ENCODE measurements at regions of chr2 and their contacts with region 1.

Region 1: DNA sequence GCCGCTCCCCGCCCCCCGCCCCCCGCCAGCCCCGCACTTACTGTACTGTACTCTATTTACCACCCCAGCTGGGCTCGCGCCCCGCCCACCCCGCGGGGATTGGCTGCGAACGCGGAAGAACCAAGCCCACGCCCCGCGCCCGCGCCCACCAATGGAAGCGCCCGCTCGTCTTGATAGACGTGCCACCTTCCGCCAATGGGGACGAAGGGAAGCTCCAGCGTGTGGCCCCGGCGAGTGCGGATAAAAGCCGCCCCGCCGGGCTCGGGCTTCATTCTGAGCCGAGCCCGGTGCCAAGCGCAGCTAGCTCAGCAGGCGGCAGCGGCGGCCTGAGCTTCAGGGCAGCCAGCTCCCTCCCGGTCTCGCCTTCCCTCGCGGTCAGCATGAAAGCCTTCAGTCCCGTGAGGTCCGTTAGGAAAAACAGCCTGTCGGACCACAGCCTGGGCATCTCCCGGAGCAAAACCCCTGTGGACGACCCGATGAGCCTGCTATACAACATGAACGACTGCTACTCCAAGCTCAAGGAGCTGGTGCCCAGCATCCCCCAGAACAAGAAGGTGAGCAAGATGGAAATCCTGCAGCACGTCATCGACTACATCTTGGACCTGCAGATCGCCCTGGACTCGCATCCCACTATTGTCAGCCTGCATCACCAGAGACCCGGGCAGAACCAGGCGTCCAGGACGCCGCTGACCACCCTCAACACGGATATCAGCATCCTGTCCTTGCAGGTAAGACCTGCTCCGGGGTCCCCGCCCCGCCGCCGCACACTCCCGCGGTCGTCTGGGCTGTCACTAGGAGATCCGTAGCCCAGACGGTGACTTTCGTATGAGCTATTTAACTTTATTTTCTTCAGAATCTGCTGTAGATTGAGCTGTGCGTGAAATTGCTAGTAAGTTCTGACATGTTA is at the start of gene ID2:
- DNase-seq: peak; percentile 92
- ATAC-seq: peak; percentile 81
- H3K4me3 ChIP-seq: peak within 1 kb of the TSS; percentile 41 to 77 (median 57)
- H3K4me3 Mint-ChIP-seq: peak within 1 kb of the TSS; percentile 92
- H3K27ac ChIP-seq: no peak within 1 kb of the TSS
- H3K27ac Mint-ChIP-seq: peak within 1 kb of the TSS; percentile 71
- H3K4me1 ChIP-seq: peaks cover 43 to 57% of the 10 kb centered on the region in 2 donors
- H3K4me1 Mint-ChIP-seq: peaks cover 54% of the 10 kb centered on the region
- H3K27me3 ChIP-seq: peaks cover 2 to 66% (median 49%) of the 10 kb centered on the region in 4 experiments
- H3K27me3 Mint-ChIP-seq: peaks cover 67% of the 10 kb centered on the region
- CTCF ChIP-seq: no peak
- total RNA-seq, gene ID2: 14.3 and 15.0 TPM in 2 replicates

Region 2: GRCh38 chr2:7037340-7038333 is 1644.4 kb before region 1 on chr2:
- CTCF ChIA-PET with region 1: no interaction called
- POLR2A ChIA-PET with region 1: no interaction called
- intact Hi-C with region 1: loop called (anchors 1 kb)
- DNase-seq: peak; percentile 59
- ATAC-seq: peak; percentile 56
- H3K4me3 ChIP-seq: no peak overlapping the region
- H3K4me3 Mint-ChIP-seq: no peak overlapping the region
- H3K27ac ChIP-seq: no peak overlapping the region
- H3K27ac Mint-ChIP-seq: no peak overlapping the region
- H3K4me1 ChIP-seq: no peaks in the 10 kb centered on the region
- H3K4me1 Mint-ChIP-seq: peaks cover 1% of the 10 kb centered on the region
- H3K27me3 ChIP-seq: no peaks in the 10 kb centered on the region
- H3K27me3 Mint-ChIP-seq: no peaks in the 10 kb centered on the region
- CTCF ChIP-seq: peak; percentile 84

Region 3: DNA sequence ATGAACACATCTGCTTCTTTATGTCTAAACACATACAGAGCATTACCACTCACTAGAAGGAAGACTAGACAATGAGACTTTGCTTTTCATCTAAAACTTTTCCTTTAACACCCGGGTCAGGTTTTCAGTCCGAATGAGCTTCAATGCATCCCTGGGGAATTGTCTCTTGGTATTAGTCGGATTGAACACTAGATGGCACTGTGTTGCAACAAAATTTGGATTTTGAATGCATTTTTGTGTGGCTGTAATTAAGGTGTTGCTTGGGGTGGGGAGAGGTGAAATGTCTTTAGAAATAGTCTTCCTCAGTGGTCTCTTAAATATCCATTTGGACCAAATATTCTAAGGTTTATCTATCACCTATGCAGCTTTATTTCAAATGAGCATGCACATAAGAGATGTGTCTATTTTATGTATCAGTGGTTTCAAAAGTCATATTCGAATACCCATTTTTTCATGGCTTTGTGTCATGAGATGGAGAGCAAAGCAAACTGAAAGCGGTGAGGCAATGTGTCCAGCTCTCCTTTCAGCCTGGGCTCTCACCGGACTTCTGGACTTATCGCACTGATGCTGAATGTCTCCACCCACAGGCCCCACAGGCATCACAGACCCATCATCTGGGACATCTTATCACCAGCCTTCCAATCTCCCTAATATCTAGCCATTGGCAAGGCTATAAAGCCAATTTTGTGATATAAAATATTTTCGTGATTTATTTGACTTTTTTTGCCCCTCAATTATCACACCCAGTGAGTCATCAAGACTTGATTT is 1254.6 kb before region 1 on chr2:
- CTCF ChIA-PET with region 1: interaction called, 22 read pairs
- POLR2A ChIA-PET with region 1: no interaction called
- intact Hi-C with region 1: no loop called
- DNase-seq: peak; percentile 73
- ATAC-seq: peak; percentile 31
- H3K4me3 ChIP-seq: no peak overlapping the region
- H3K4me3 Mint-ChIP-seq: no peak overlapping the region
- H3K27ac ChIP-seq: no peak overlapping the region
- H3K27ac Mint-ChIP-seq: no peak overlapping the region
- H3K4me1 ChIP-seq: peaks cover 11 to 14% of the 10 kb centered on the region in 2 donors
- H3K4me1 Mint-ChIP-seq: peaks cover 7% of the 10 kb centered on the region
- H3K27me3 ChIP-seq: peaks cover 0 to 43% (median 11%) of the 10 kb centered on the region in 4 experiments
- H3K27me3 Mint-ChIP-seq: peaks cover 57% of the 10 kb centered on the region
- CTCF ChIP-seq: peak; percentile 81

Region 4: DNA sequence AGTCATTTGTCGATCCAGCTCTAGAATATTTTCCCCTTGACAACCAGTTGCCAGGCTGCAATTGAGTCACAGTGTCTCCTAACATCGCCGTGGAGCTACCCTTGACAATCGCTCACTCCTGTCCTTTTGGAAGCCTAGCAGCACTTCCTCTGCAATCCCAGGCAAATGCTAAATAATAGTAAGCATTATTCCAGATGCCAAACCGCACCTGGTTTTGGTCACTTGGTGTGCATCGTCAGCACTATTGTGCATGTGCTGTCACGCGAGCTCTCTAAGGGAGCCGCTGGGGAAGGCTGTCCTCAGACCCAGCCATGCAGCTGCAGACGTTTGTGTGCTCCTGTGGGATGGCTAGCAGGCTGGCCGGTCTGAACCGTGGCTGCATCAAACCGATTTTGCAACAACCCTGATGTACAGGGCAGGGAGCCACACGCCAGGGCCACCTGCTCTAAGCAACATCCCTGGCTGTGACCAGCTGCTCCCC is 549.6 kb before region 1 on chr2:
- CTCF ChIA-PET with region 1: no interaction called
- POLR2A ChIA-PET with region 1: no interaction called
- intact Hi-C with region 1: no loop called
- DNase-seq: no peak
- ATAC-seq: no peak
- H3K4me3 ChIP-seq: no peak overlapping the region
- H3K4me3 Mint-ChIP-seq: no peak overlapping the region
- H3K27ac ChIP-seq: no peak overlapping the region
- H3K27ac Mint-ChIP-seq: no peak overlapping the region
- H3K4me1 ChIP-seq: peaks cover 0 to 5% of the 10 kb centered on the region in 2 donors
- H3K4me1 Mint-ChIP-seq: peaks cover 3% of the 10 kb centered on the region
- H3K27me3 ChIP-seq: peaks cover 0 to 4% (median 0%) of the 10 kb centered on the region in 4 experiments
- H3K27me3 Mint-ChIP-seq: peaks cover 18% of the 10 kb centered on the region
- CTCF ChIP-seq: no peak

Region 5: GRCh38 chr2:8303322-8303832 is 378.7 kb before region 1 on chr2:
- CTCF ChIA-PET with region 1: no interaction called
- POLR2A ChIA-PET with region 1: no interaction called
- intact Hi-C with region 1: loop called (anchors 10 kb)
- DNase-seq: peak; percentile 80
- ATAC-seq: peak; percentile 82
- H3K4me3 ChIP-seq: no peak overlapping the region
- H3K4me3 Mint-ChIP-seq: peak overlapping the region; percentile 57
- H3K27ac ChIP-seq: no peak overlapping the region
- H3K27ac Mint-ChIP-seq: peak overlapping the region; percentile 62
- H3K4me1 ChIP-seq: peaks cover 43 to 51% of the 10 kb centered on the region in 2 donors
- H3K4me1 Mint-ChIP-seq: peaks cover 38% of the 10 kb centered on the region
- H3K27me3 ChIP-seq: peaks cover 0 to 78% (median 55%) of the 10 kb centered on the region in 4 experiments
- H3K27me3 Mint-ChIP-seq: peaks cover 81% of the 10 kb centered on the region
- CTCF ChIP-seq: no peak

Region 6: GRCh38 chr2:8525582-8526402 is 156.2 kb before region 1 on chr2:
- CTCF ChIA-PET with region 1: no interaction called
- POLR2A ChIA-PET with region 1: no interaction called
- intact Hi-C with region 1: loop called (anchors 5 kb)
- DNase-seq: peak; percentile 58
- ATAC-seq: peak; percentile 36
- H3K4me3 ChIP-seq: no peak overlapping the region
- H3K4me3 Mint-ChIP-seq: peak overlapping the region; percentile 66
- H3K27ac ChIP-seq: no peak overlapping the region
- H3K27ac Mint-ChIP-seq: no peak overlapping the region
- H3K4me1 ChIP-seq: peaks cover 22 to 38% of the 10 kb centered on the region in 2 donors
- H3K4me1 Mint-ChIP-seq: peaks cover 35% of the 10 kb centered on the region
- H3K27me3 ChIP-seq: peaks cover 0 to 40% (median 2%) of the 10 kb centered on the region in 4 experiments
- H3K27me3 Mint-ChIP-seq: peaks cover 46% of the 10 kb centered on the region
- CTCF ChIP-seq: no peak

Region 7: GRCh38 chr2:8836971-8837794 is 155.1 kb after region 1 on chr2 and contains the start of gene KIDINS220:
- CTCF ChIA-PET with region 1: no interaction called
- POLR2A ChIA-PET with region 1: no interaction called
- intact Hi-C with region 1: loop called (anchors 2 kb)
- DNase-seq: peak; percentile 92
- ATAC-seq: peak; percentile 98
- H3K4me3 ChIP-seq: peak within 1 kb of the TSS; percentile 36 to 93 (median 84)
- H3K4me3 Mint-ChIP-seq: peak within 1 kb of the TSS; percentile 98
- H3K27ac ChIP-seq: peak within 1 kb of the TSS; percentile 36 to 75
- H3K27ac Mint-ChIP-seq: peak within 1 kb of the TSS; percentile 98
- H3K4me1 ChIP-seq: peaks cover 24 to 25% of the 10 kb centered on the region in 2 donors
- H3K4me1 Mint-ChIP-seq: peaks cover 36% of the 10 kb centered on the region
- H3K27me3 ChIP-seq: no peaks in the 10 kb centered on the region
- H3K27me3 Mint-ChIP-seq: peaks cover 4% of the 10 kb centered on the region
- CTCF ChIP-seq: no peak
- total RNA-seq, gene KIDINS220: 36.6 and 43.6 TPM in 2 replicates